Right ventricle myocardium inferior (tissue), 1 donor: ENCODE measurements at regions of chr16 and their contacts with region 1.

Region 1: GRCh38 chr16:4087099-4087885 is 28.9 kb downstream of the ADCY9 start:
- DNase-seq: no peak
- ATAC-seq: no peak

Region 2: DNA sequence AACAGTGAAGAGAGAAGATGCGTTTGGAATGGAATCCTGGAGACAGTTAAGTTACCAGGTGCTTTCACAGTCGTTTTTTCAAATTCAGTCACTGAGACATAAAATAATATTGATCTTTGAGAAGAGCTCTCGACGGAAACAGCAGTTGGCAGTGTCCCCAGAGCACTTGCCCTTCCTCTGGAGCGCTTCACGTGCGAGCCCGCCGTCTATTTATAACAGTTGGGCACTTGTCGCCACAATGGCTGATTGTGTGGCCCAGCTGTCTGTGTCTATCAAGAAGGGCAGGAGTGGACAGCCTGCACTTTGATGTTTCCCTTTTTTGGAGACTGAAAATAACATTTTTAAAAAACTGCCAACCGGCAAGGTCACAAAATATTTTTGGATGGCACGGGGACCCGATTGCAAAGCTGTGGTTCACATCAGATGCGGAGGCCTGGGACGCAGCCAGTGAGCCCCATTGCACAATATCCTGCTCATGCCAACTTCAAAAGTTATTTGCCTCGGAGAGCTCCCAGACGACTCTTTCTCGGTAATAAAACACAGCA is 33.9 kb before region 1 on chr16:
- intact Hi-C with region 1: loop called (anchors 2 kb)
- DNase-seq: peak; percentile 80
- ATAC-seq: peak; percentile 77